ENCODE measurements at regions of chr4 and their contacts with region 1.

Region 1: GRCh38 chr4:112145326-112145819 is at the start of gene FAM241A:
- DNase-seq: peak; percentile 97
- H3K4me3 ChIP-seq: peak within 1 kb of the TSS; percentile 72 to 92 (median 89)
- H3K27ac ChIP-seq: peak within 1 kb of the TSS; percentile 92 to 97 (median 94)
- H3K4me1 ChIP-seq: peaks cover 17 to 28% (median 19%) of the 10 kb centered on the region in 4 donors
- H3K27me3 ChIP-seq: no peaks in the 10 kb centered on the region
- CTCF ChIP-seq: no peak
- EP300 ChIP-seq: no peak
- POLR2A ChIP-seq: peak; percentile 46
- total RNA-seq, gene FAM241A: 5.0 to 7.5 (median 5.2) TPM

Region 2: GRCh38 chr4:112234952-112235609 is 89.7 kb after region 1 on chr4:
- intact Hi-C with region 1: loop called (anchors 2 kb)
- DNase-seq: no peak
- H3K4me3 ChIP-seq: no peak overlapping the region
- H3K27ac ChIP-seq: no peak overlapping the region
- H3K4me1 ChIP-seq: peaks cover 6 to 30% (median 23%) of the 10 kb centered on the region in 4 donors
- H3K27me3 ChIP-seq: no peaks in the 10 kb centered on the region
- CTCF ChIP-seq: peak; percentile 74 to 80 (median 75)
- EP300 ChIP-seq: no peak
- POLR2A ChIP-seq: no peak

Measured in esophagus muscularis mucosa (tissue), 4 donors.